Ovary (tissue), 10 donors: ENCODE measurements at regions of chrX and their contacts with region 1.

Region 1: GRCh38 chrX:150365051-150365989 is 2.2 kb downstream of the MAMLD1 start:
- DNase-seq: peak; percentile 78 to 87 (median 85)
- H3K4me3 ChIP-seq: peak overlapping the region; percentile 52
- H3K27ac ChIP-seq: peak overlapping the region; percentile 75 to 88
- H3K4me1 ChIP-seq: peaks cover 3% of the 10 kb centered on the region
- H3K27me3 ChIP-seq: no peaks in the 10 kb centered on the region
- CTCF ChIP-seq: peak; percentile 30 to 73 (median 72)
- EP300 ChIP-seq: no peak
- POLR2A ChIP-seq: peak; percentile 47

Region 2: GRCh38 chrX:149962859-149963757 is 402.2 kb before region 1 on chrX:
- intact Hi-C with region 1: loop called in 2 of 4 experiments (anchors 10 kb)
- DNase-seq: peak; percentile 35 to 60 (median 53)
- H3K4me3 ChIP-seq: no peak overlapping the region
- H3K27ac ChIP-seq: no peak overlapping the region
- H3K4me1 ChIP-seq: no peaks in the 10 kb centered on the region
- H3K27me3 ChIP-seq: peaks cover 3% of the 10 kb centered on the region
- CTCF ChIP-seq: peak in 2 of 3 donors; percentile 49 to 59
- EP300 ChIP-seq: no peak
- POLR2A ChIP-seq: no peak

Region 3: GRCh38 chrX:150508451-150509367 is 143.4 kb after region 1 on chrX:
- intact Hi-C with region 1: loop called in 2 of 4 experiments (anchors 5 to 10 kb)
- DNase-seq: peak; percentile 80 to 86 (median 82)
- H3K4me3 ChIP-seq: no peak overlapping the region
- H3K27ac ChIP-seq: peak overlapping the region; percentile 53 to 90
- H3K4me1 ChIP-seq: peaks cover 3% of the 10 kb centered on the region
- H3K27me3 ChIP-seq: no peaks in the 10 kb centered on the region
- CTCF ChIP-seq: no peak
- EP300 ChIP-seq: no peak
- POLR2A ChIP-seq: no peak

Region 4: DNA sequence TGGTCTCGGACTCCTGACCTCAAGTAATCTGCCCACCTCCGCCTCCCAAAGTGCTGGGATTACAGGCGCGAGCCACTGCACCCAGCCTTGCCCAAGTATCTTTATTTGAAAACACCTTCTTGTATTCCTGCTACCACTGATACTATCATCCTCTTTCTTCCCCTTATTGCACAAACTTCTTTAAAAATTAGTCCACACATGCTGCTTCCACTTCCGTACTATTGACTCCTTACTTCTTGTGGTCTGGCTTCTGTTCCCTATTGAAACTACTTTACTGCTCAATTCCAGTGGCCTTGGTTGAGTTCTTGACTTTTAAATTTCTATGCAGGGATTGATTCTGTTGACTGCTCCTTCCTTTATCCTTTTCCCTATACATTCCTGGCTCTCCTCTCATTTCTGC is 241.9 kb after region 1 on chrX:
- intact Hi-C with region 1: no loop called
- DNase-seq: no peak
- H3K4me3 ChIP-seq: no peak overlapping the region
- H3K27ac ChIP-seq: no peak overlapping the region
- H3K4me1 ChIP-seq: peaks cover 6% of the 10 kb centered on the region
- H3K27me3 ChIP-seq: no peaks in the 10 kb centered on the region
- CTCF ChIP-seq: no peak
- EP300 ChIP-seq: no peak
- POLR2A ChIP-seq: no peak

Region 5: GRCh38 chrX:150683536-150684146 is 318.3 kb after region 1 on chrX:
- intact Hi-C with region 1: loop called in 1 of 4 experiments (anchors 10 kb)
- DNase-seq: no peak
- H3K4me3 ChIP-seq: no peak overlapping the region
- H3K27ac ChIP-seq: no peak overlapping the region
- H3K4me1 ChIP-seq: no peaks in the 10 kb centered on the region
- H3K27me3 ChIP-seq: no peaks in the 10 kb centered on the region
- CTCF ChIP-seq: peak in 1 of 3 donors; percentile 12
- EP300 ChIP-seq: no peak
- POLR2A ChIP-seq: no peak